ENCODE measurements at regions of chr6 and their contacts with region 1.

Region 1: GRCh38 chr6:33299237-33299944 is 649 bp upstream of the RGL2 start:
- DNase-seq: peak; percentile 93
- H3K4me3 Mint-ChIP-seq: peak overlapping the region; percentile 96
- H3K27ac Mint-ChIP-seq: peak overlapping the region; percentile 100
- H3K4me1 Mint-ChIP-seq: peaks cover 28% of the 10 kb centered on the region
- H3K27me3 Mint-ChIP-seq: no peaks in the 10 kb centered on the region
- CTCF ChIP-seq: peak; percentile 64

Region 2: GRCh38 chr6:33200219-33201146 is 98.9 kb before region 1 on chr6 and contains the starts of genes RXRB and SLC39A7:
- CTCF ChIA-PET with region 1: no interaction called
- POLR2A ChIA-PET with region 1: interaction called, 3 read pairs
- intact Hi-C with region 1: loop called (anchors 5 kb)
- DNase-seq: peak; percentile 99
- H3K4me3 Mint-ChIP-seq: peak within 1 kb of the TSS; percentile 98
- H3K27ac Mint-ChIP-seq: peak within 1 kb of the TSS; percentile 100
- H3K4me1 Mint-ChIP-seq: peaks cover 61% of the 10 kb centered on the region
- H3K27me3 Mint-ChIP-seq: no peaks in the 10 kb centered on the region
- CTCF ChIP-seq: no peak
- total RNA-seq, gene RXRB: 29.6 and 35.1 TPM in 2 replicates
- total RNA-seq, gene SLC39A7: 118 and 187 TPM in 2 replicates

Region 3: DNA sequence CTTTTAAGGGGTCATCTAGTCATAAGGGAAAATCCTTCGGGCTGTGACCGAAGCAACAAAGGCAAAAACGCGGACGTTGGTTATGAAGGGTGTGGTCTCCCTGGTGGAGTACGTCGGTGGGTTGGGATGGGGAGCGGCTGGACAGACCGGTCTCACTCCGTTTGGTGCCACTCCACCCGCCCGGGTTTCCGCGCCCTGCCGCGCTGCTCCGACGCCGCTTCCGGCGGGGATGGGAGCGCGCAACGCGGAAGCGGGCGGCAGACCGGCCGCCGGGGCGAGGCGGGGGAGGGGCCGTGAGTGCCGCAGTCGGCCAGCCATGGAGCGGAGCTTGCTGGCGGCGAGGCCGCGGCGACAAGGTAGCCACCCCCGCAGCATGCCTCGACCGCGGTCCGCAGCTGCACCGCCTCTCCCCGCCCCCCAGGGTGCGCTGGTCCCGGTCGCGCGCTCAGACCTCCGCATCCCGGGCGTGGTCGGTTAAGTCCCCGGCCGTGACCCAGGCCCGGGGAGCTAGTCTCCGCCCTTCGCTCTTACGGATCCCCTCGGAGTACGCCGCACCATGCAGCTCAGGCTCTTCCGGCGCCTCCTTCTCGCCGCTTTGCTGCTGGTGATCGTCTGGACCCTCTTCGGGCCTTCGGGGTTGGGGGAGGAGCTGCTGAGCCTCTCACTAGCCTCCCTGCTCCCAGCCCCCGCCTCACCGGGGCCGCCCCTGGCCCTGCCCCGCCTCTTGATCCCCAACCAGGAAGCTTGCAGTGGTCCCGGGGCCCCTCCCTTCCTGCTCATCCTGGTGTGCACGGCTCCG is 22.3 kb before region 1 on chr6 and contains the start of gene B3GALT4:
- CTCF ChIA-PET with region 1: interaction called, 4 read pairs
- POLR2A ChIA-PET with region 1: interaction called, 31 read pairs
- intact Hi-C with region 1: loop called (anchors 2 kb)
- DNase-seq: peak; percentile 72
- H3K4me3 Mint-ChIP-seq: peak within 1 kb of the TSS; percentile 99
- H3K27ac Mint-ChIP-seq: peak within 1 kb of the TSS; percentile 80
- H3K4me1 Mint-ChIP-seq: peaks cover 30% of the 10 kb centered on the region
- H3K27me3 Mint-ChIP-seq: no peaks in the 10 kb centered on the region
- CTCF ChIP-seq: peak; percentile 52
- total RNA-seq, gene B3GALT4: 0.37 and 0.58 TPM in 2 replicates

Region 4: DNA sequence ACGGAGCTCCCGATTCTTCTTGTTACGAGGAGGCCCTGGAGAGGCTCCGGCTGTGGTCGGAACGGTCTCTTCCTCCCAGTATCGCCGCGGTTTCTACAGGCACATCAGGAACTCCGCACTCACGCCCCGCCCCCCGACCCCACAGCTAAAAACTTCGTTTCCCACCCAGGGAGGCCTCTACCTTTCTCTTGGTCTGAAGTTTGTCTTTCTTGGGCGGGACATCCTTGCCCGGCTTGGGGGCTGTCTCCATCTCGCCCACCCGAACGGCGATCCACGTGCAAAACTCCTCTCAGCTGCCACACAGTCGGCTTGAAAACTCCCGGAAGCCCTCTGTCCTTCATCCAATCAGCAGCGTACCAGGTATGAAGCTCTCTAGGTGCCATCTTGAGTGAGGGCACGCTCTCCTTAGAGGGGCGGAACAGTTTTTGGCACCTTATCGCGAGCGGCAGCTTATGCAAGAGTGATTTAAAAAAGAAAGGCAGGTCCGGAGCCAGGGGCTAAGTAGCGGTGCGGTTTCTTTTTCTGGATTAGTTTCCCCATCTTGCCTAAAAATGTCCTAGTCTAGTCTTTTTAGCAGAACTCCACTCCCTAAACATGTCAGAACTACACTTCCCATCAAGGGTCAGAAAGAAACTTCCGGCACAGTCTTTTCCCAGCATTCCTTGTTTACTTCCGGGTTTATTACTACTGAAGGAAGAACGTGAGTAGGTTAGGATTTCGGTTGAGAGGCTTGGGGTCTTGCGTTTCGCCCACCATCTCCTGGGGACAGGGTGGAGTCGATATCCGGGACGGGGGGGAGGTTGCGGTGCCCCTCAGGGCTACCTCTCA is 10.3 kb before region 1 on chr6 and contains the starts of genes PFDN6 and WDR46:
- CTCF ChIA-PET with region 1: interaction called, 10 read pairs
- POLR2A ChIA-PET with region 1: interaction called, 81 read pairs
- intact Hi-C with region 1: no loop called
- DNase-seq: peak; percentile 93
- H3K4me3 Mint-ChIP-seq: peak within 1 kb of the TSS; percentile 88
- H3K27ac Mint-ChIP-seq: peak within 1 kb of the TSS; percentile 89
- H3K4me1 Mint-ChIP-seq: peaks cover 24% of the 10 kb centered on the region
- H3K27me3 Mint-ChIP-seq: no peaks in the 10 kb centered on the region
- CTCF ChIP-seq: no peak
- total RNA-seq, gene PFDN6: 54.7 and 67.1 TPM in 2 replicates
- total RNA-seq, gene WDR46: 53.1 and 57.0 TPM in 2 replicates

Region 5: GRCh38 chr6:33312409-33313158 is 13.2 kb after region 1 on chr6:
- CTCF ChIA-PET with region 1: interaction called, 18 read pairs
- POLR2A ChIA-PET with region 1: interaction called, 84 read pairs
- intact Hi-C with region 1: no loop called
- DNase-seq: peak; percentile 87
- H3K4me3 Mint-ChIP-seq: peak overlapping the region; percentile 96
- H3K27ac Mint-ChIP-seq: peak overlapping the region; percentile 99
- H3K4me1 Mint-ChIP-seq: peaks cover 31% of the 10 kb centered on the region
- H3K27me3 Mint-ChIP-seq: no peaks in the 10 kb centered on the region
- CTCF ChIP-seq: no peak

Region 6: DNA sequence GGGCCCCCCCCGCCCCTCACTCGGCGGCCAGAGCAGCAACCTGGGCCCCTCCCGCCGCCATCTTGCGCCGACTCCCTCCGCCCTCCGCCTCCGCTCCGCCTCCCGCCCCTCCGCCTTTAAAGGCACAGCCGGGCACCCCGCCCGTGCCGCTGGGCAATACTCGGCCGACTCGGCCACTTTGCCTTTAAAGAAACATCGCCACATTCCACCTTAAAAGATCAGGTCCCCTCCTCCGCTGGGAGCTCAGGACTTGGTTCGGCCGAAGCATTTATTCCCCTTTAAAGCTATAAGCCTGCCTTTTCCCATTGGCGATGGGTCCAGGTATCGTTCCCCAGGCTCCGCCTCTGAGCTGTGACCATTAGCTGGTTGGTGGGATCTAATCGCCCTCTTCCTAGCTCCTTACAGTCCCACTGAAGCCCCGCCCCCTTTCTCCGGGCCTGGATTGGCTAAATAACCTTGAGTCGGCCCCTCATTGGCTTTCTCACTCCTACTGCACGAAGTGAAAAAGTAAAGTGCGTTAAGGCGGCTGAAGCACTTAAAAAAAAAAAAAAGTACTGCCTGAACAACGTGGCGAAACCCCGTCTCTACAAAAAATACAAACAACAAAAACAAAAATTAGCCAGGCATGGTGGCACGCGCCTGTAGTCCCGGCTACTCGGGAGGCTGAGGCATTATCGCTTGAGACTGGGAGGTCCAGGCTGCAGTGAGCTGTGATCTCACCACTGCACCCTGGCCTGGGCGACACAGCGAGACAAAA is 18.5 kb after region 1 on chr6 and contains the start of gene ZBTB22:
- CTCF ChIA-PET with region 1: interaction called, 18 read pairs
- POLR2A ChIA-PET with region 1: interaction called, 84 read pairs
- intact Hi-C with region 1: no loop called
- DNase-seq: peak; percentile 100
- H3K4me3 Mint-ChIP-seq: peak within 1 kb of the TSS; percentile 81
- H3K27ac Mint-ChIP-seq: peak within 1 kb of the TSS; percentile 80
- H3K4me1 Mint-ChIP-seq: peaks cover 66% of the 10 kb centered on the region
- H3K27me3 Mint-ChIP-seq: no peaks in the 10 kb centered on the region
- CTCF ChIP-seq: no peak
- total RNA-seq, gene ZBTB22: 12.3 and 15.5 TPM in 2 replicates

Region 7: GRCh38 chr6:33397541-33397940 is 98.2 kb after region 1 on chr6:
- CTCF ChIA-PET with region 1: no interaction called
- POLR2A ChIA-PET with region 1: no interaction called
- intact Hi-C with region 1: no loop called
- DNase-seq: no peak
- H3K4me3 Mint-ChIP-seq: no peak overlapping the region
- H3K27ac Mint-ChIP-seq: peak overlapping the region; percentile 43
- H3K4me1 Mint-ChIP-seq: peaks cover 31% of the 10 kb centered on the region
- H3K27me3 Mint-ChIP-seq: no peaks in the 10 kb centered on the region
- CTCF ChIP-seq: no peak

Measured in MCF 10A (cell line).